Heart right ventricle (tissue), 16 donors: ENCODE measurements at regions of chr14 and their contacts with region 1.

Region 1: GRCh38 chr14:31127690-31128089 is 79.9 kb downstream of the HECTD1 start:
- DNase-seq: no peak
- ATAC-seq: no peak
- H3K4me3 ChIP-seq: no peak overlapping the region
- H3K27ac ChIP-seq: no peak overlapping the region
- H3K4me1 ChIP-seq: peaks cover 0 to 10% (median 0%) of the 10 kb centered on the region in 9 donors
- H3K27me3 ChIP-seq: no peaks in the 10 kb centered on the region
- CTCF ChIP-seq: no peak

Region 2: DNA sequence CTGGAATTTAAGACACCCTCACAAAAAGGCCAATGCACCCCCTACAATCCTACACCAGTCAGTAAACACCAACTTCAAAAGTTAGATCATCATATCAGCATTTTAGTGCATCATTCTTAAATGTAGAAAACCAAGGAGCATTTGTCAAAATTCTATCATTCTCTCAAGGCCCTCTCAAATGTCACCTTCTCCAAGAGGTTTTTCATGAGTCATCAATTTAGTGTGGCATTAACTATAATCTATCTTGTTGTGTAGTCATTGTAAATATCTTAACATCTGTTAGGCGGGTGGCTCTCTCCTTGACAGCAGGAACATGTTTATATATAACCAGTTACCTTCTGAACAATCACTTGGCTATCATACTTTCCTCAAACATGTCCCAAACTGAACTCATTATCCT is 630.8 kb before region 1 on chr14:
- intact Hi-C with region 1: no loop called
- DNase-seq: no peak
- ATAC-seq: no peak
- H3K4me3 ChIP-seq: no peak overlapping the region
- H3K27ac ChIP-seq: no peak overlapping the region
- H3K4me1 ChIP-seq: no peaks in the 10 kb centered on the region
- H3K27me3 ChIP-seq: peaks cover 0 to 4% (median 0%) of the 10 kb centered on the region in 7 donors
- CTCF ChIP-seq: no peak

Region 3: GRCh38 chr14:31297701-31298344 is 170.1 kb after region 1 on chr14:
- intact Hi-C with region 1: loop called in 1 of 10 experiments (anchors 5 kb)
- DNase-seq: no peak
- ATAC-seq: no peak
- H3K4me3 ChIP-seq: no peak overlapping the region
- H3K27ac ChIP-seq: no peak overlapping the region
- H3K4me1 ChIP-seq: peaks cover 0 to 5% (median 0%) of the 10 kb centered on the region in 9 donors
- H3K27me3 ChIP-seq: no peaks in the 10 kb centered on the region
- CTCF ChIP-seq: no peak